Esophagus muscularis mucosa (tissue), 4 donors: ENCODE measurements at regions of chr18 and their contacts with region 1.

Region 1: GRCh38 chr18:2571200-2572143 is at the starts of genes METTL4 and NDC80:
- DNase-seq: peak; percentile 96
- H3K4me3 ChIP-seq: peak within 1 kb of the TSS; percentile 60 to 75 (median 69)
- H3K27ac ChIP-seq: peak within 1 kb of the TSS; percentile 87 to 96 (median 90)
- H3K4me1 ChIP-seq: peaks cover 10 to 28% (median 25%) of the 10 kb centered on the region in 4 donors
- H3K27me3 ChIP-seq: peaks cover 0 to 7% (median 0%) of the 10 kb centered on the region in 4 donors
- CTCF ChIP-seq: no peak
- EP300 ChIP-seq: no peak
- POLR2A ChIP-seq: no peak
- total RNA-seq, gene METTL4: 4.3 to 8.3 (median 5.7) TPM
- total RNA-seq, gene NDC80: 0.17 to 0.57 (median 0.42) TPM in 3 of 4 donors, not detected in the other

Region 2: DNA sequence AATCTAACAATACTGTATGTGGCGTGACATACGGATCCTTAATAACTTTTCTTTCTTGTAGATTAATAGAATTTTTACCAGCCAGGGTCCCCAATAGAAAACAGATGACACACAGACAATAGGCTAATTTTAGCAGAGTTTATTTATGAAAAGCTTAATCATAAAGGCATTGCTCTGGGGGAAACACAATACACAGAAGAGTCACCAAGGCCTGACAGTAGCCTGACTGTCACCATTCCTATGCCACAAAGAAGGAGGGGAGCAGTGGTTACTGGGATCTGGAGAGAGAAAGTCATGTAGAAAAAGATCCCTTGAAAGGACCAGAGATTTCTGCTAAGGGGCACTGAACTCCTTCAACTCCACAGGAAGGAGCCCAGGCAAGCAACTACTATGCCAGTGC is 139.7 kb before region 1 on chr18:
- intact Hi-C with region 1: no loop called
- DNase-seq: no peak
- H3K4me3 ChIP-seq: no peak overlapping the region
- H3K27ac ChIP-seq: no peak overlapping the region
- H3K4me1 ChIP-seq: no peaks in the 10 kb centered on the region
- H3K27me3 ChIP-seq: no peaks in the 10 kb centered on the region
- CTCF ChIP-seq: no peak
- EP300 ChIP-seq: no peak
- POLR2A ChIP-seq: no peak

Region 3: GRCh38 chr18:2471523-2471922 is 99.9 kb before region 1 on chr18:
- intact Hi-C with region 1: no loop called
- DNase-seq: no peak
- H3K4me3 ChIP-seq: no peak overlapping the region
- H3K27ac ChIP-seq: no peak overlapping the region
- H3K4me1 ChIP-seq: no peaks in the 10 kb centered on the region
- H3K27me3 ChIP-seq: no peaks in the 10 kb centered on the region
- CTCF ChIP-seq: no peak
- EP300 ChIP-seq: no peak
- POLR2A ChIP-seq: no peak

Region 4: GRCh38 chr18:2655178-2655953 is 83.9 kb after region 1 on chr18 and contains the start of gene SMCHD1:
- intact Hi-C with region 1: loop called (anchors 5 kb)
- DNase-seq: peak; percentile 96
- H3K4me3 ChIP-seq: peak within 1 kb of the TSS; percentile 91 to 98 (median 94)
- H3K27ac ChIP-seq: peak within 1 kb of the TSS; percentile 97 to 99 (median 98)
- H3K4me1 ChIP-seq: peaks cover 23 to 45% (median 43%) of the 10 kb centered on the region in 4 donors
- H3K27me3 ChIP-seq: no peaks in the 10 kb centered on the region
- CTCF ChIP-seq: no peak
- EP300 ChIP-seq: no peak
- POLR2A ChIP-seq: peak; percentile 38
- total RNA-seq, gene SMCHD1: 47.9 to 62.3 (median 58.2) TPM